Naive thymus-derived CD4-positive, alpha-beta T cell (primary cell): ENCODE measurements at regions of chr19 and their contacts with region 1.

Region 1: GRCh38 chr19:57613941-57614743 is at the start of gene ZNF134:
- DNase-seq: peak; percentile 74 to 90 (median 84)
- ATAC-seq: peak; percentile 100
- H3K4me3 ChIP-seq: peak within 1 kb of the TSS; percentile 94
- H3K4me3 Mint-ChIP-seq: peak within 1 kb of the TSS; percentile 79 to 95 (median 90)
- H3K27ac ChIP-seq: peak within 1 kb of the TSS; percentile 76
- H3K27ac Mint-ChIP-seq: peak within 1 kb of the TSS; percentile 78 to 92 (median 86)
- H3K4me1 ChIP-seq: peaks cover 14 to 15% of the 10 kb centered on the region in 2 donors
- H3K4me1 Mint-ChIP-seq: peaks cover 18 to 43% (median 34%) of the 10 kb centered on the region in 7 donors
- H3K27me3 ChIP-seq: no peaks in the 10 kb centered on the region
- H3K27me3 Mint-ChIP-seq: no peaks in the 10 kb centered on the region
- total RNA-seq, gene ZNF134: 14.6 to 33.9 (median 25.7) TPM

Region 2: DNA sequence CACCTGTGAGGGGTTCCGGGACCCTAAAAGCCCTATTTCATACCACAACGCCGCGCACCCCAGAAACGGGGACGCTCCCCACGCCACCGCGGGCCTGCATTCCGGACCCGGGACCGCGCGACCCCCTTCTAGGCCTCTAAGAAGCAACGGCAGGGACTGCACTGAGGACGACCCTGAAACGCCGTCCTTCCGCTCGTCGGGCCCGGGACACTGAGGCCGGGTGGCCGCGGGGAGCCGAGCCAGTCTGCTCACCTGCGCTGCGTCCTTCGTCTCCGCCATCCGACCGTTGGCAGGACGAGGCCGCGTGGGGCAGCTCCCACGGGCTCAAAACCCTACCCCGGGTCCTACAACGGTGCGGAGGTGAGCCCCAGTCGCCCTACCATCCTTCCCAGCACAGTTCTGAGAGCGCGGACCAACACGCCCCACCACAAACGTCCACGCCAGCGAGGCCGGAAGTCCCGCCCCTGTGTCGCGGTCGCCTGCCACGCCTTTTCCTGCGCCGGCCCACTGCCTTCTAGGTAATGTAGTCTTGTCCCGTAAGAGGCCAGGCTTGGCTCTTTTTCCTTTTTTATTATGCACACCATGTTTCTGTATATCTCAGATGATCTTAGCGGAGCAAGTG is 54.6 kb before region 1 on chr19 and contains the start of gene ZNF550:
- CTCF ChIA-PET with region 1: no interaction called
- POLR2A ChIA-PET with region 1: no interaction called
- intact Hi-C with region 1: loop called (anchors 1 to 2 kb)
- DNase-seq: peak; percentile 71 to 85 (median 84)
- ATAC-seq: peak; percentile 99
- H3K4me3 ChIP-seq: peak within 1 kb of the TSS; percentile 89
- H3K4me3 Mint-ChIP-seq: peak within 1 kb of the TSS; percentile 87 to 99 (median 98)
- H3K27ac ChIP-seq: peak within 1 kb of the TSS; percentile 82
- H3K27ac Mint-ChIP-seq: peak within 1 kb of the TSS; percentile 81 to 96 (median 91)
- H3K4me1 ChIP-seq: peaks cover 16 to 19% of the 10 kb centered on the region in 2 donors
- H3K4me1 Mint-ChIP-seq: peaks cover 21 to 45% (median 33%) of the 10 kb centered on the region in 7 donors
- H3K27me3 ChIP-seq: no peaks in the 10 kb centered on the region
- H3K27me3 Mint-ChIP-seq: peaks cover 0 to 16% (median 4%) of the 10 kb centered on the region in 5 donors
- total RNA-seq, gene ZNF550: 12.9 to 56.2 (median 23.5) TPM

Region 3: DNA sequence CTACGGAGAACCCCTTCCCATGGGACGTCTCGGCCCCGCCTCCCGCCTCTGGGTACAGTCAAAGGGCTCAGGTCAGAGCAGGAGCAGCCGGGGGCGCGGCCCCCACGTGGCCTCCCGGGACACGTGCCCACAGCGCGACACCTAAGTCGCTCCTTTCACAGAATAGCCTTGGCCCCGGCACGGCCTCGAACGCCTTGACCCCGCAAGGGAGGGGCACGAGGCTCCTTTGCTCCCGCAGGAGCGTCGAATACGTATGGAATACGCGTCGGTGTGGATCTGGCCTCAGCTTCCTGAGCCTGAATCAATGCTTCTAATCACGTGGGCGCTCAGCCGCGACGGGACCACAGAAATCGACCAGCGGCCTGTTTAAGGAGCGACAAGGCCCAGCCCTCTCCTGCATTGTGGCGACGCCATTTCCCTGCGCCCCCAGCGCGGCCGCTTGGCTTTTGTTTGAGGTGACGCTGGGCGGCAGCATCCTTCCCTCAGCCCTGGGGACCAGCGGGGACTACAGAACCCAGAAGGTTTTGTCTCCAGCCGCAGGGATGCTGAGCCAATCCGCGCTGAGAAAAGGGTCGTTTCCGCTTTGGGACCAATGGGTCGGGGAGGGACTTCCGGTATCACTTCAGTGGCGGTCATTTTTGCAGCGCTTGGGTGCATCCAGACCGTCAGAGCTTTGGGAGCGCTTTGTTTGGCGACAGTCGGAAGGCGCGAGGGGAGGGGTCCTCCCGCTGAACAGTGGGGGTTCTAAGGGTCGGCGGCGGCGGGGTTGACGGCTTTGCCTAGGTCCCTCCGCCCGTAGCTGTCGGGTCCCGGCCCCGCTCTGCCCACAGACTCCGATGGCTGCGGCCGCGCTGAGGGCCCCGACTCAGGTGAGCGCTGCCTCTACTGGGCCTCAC is 30.4 kb before region 1 on chr19 and contains the start of gene ZIK1:
- CTCF ChIA-PET with region 1: no interaction called
- POLR2A ChIA-PET with region 1: interaction called, 6 read pairs
- intact Hi-C with region 1: loop called (anchors 1 kb)
- DNase-seq: peak; percentile 61 to 91 (median 85)
- ATAC-seq: peak; percentile 93
- H3K4me3 ChIP-seq: peak within 1 kb of the TSS; percentile 55
- H3K4me3 Mint-ChIP-seq: peak within 1 kb of the TSS; percentile 89 to 99 (median 94)
- H3K27ac ChIP-seq: peak within 1 kb of the TSS; percentile 45
- H3K27ac Mint-ChIP-seq: peak within 1 kb of the TSS; percentile 76 to 95 (median 90)
- H3K4me1 ChIP-seq: peaks cover 10 to 12% of the 10 kb centered on the region in 2 donors
- H3K4me1 Mint-ChIP-seq: peaks cover 12 to 28% (median 24%) of the 10 kb centered on the region in 7 donors
- H3K27me3 ChIP-seq: no peaks in the 10 kb centered on the region
- H3K27me3 Mint-ChIP-seq: no peaks in the 10 kb centered on the region
- total RNA-seq, gene ZIK1: 4.8 to 14.1 (median 7.0) TPM

Region 4: DNA sequence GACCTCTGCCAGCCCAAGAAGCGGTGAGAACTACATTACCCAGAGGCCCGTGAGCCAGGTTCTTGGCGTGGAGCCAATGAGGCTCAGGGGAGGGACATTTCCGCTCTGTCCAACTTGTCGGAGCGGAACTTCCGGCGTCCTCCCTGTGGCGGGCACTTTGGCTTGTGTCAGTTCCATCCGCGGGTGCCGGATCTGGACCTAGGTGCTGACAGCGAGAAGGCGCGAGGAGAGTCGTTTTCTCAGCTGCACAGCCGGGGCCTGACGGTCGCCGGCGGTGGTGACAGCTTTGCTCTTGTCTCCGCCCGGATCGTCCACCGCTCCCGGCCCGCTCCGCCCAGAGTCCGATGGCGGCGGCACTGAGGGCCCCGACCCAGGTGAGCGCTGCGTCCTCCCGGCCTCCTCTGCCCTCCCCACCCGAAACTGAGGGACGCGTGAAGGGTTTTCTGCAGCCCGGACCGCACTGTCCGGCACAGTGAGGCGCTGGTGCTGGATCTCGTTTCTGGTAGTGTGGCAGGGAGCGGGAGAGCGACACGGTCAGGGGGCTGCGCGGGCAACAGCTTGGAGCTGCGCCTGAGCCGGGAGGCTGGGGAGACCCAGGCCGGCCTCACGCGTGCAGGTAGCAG is 14.3 kb before region 1 on chr19 and contains the start of gene ZNF530:
- CTCF ChIA-PET with region 1: no interaction called
- POLR2A ChIA-PET with region 1: interaction called, 11 read pairs
- intact Hi-C with region 1: loop called (anchors 1 kb)
- DNase-seq: peak; percentile 61 to 81 (median 73)
- ATAC-seq: peak; percentile 97
- H3K4me3 ChIP-seq: peak within 1 kb of the TSS; percentile 87
- H3K4me3 Mint-ChIP-seq: peak within 1 kb of the TSS; percentile 71 to 92 (median 89)
- H3K27ac ChIP-seq: peak within 1 kb of the TSS; percentile 69
- H3K27ac Mint-ChIP-seq: peak within 1 kb of the TSS in 8 of 9 donors; percentile 51 to 90 (median 81)
- H3K4me1 ChIP-seq: peaks cover 10% of the 10 kb centered on the region in 2 donors
- H3K4me1 Mint-ChIP-seq: peaks cover 14 to 28% (median 22%) of the 10 kb centered on the region in 7 donors
- H3K27me3 ChIP-seq: no peaks in the 10 kb centered on the region
- H3K27me3 Mint-ChIP-seq: no peaks in the 10 kb centered on the region
- total RNA-seq, gene ZNF530: 2.0 to 10.9 (median 6.2) TPM

Region 5: GRCh38 chr19:57746580-57747471 is 132.7 kb after region 1 on chr19 and contains the start of gene ZNF776:
- CTCF ChIA-PET with region 1: no interaction called
- POLR2A ChIA-PET with region 1: no interaction called
- intact Hi-C with region 1: loop called in 1 of 2 experiments (anchors 1 kb)
- DNase-seq: peak; percentile 40 to 90 (median 84)
- ATAC-seq: peak; percentile 99
- H3K4me3 ChIP-seq: peak within 1 kb of the TSS; percentile 86
- H3K4me3 Mint-ChIP-seq: peak within 1 kb of the TSS; percentile 91 to 99 (median 94)
- H3K27ac ChIP-seq: peak within 1 kb of the TSS; percentile 85
- H3K27ac Mint-ChIP-seq: peak within 1 kb of the TSS; percentile 81 to 99 (median 94)
- H3K4me1 ChIP-seq: peaks cover 6 to 16% of the 10 kb centered on the region in 2 donors
- H3K4me1 Mint-ChIP-seq: peaks cover 13 to 40% (median 26%) of the 10 kb centered on the region in 7 donors
- H3K27me3 ChIP-seq: no peaks in the 10 kb centered on the region
- H3K27me3 Mint-ChIP-seq: no peaks in the 10 kb centered on the region
- total RNA-seq, gene ZNF776: 18.9 to 52.3 (median 21.8) TPM